ENCODE measurements at regions of chr4 and their contacts with region 1.

Region 1: GRCh38 chr4:76949276-76950051 is at the start of gene SEPTIN11:
- DNase-seq: peak; percentile 97
- H3K4me3 ChIP-seq: peak within 1 kb of the TSS; percentile 70 to 87 (median 78)
- H3K27ac ChIP-seq: peak within 1 kb of the TSS; percentile 87 to 95 (median 92)
- H3K4me1 ChIP-seq: peaks cover 2 to 27% (median 16%) of the 10 kb centered on the region in 4 donors
- H3K27me3 ChIP-seq: no peaks in the 10 kb centered on the region
- CTCF ChIP-seq: no peak
- EP300 ChIP-seq: no peak
- POLR2A ChIP-seq: peak; percentile 52 to 64
- total RNA-seq, gene SEPTIN11: 43.0 to 143 (median 107) TPM

Region 2: DNA sequence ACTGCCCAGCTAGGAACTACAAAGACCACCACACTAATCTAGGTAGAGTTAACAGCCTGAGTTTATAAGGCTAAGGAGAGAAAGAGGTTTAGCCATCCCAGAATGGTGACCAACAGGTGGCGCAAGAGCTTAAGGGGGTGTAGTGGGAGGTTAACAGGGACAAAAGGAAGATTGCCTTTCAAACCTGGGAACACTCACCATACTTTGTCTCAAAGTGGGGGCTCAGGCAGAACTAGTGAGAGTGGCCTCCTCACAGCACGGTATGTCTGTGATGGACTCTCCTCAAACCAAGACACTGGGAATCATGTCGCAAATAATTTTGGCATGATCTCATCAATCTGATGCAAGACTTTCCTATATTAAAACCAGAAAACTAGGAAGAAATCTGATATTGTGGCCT is 102.9 kb after region 1 on chr4:
- intact Hi-C with region 1: loop called (anchors 5 kb)
- DNase-seq: no peak
- H3K4me3 ChIP-seq: no peak overlapping the region
- H3K27ac ChIP-seq: no peak overlapping the region
- H3K4me1 ChIP-seq: peaks cover 0 to 9% (median 4%) of the 10 kb centered on the region in 4 donors
- H3K27me3 ChIP-seq: no peaks in the 10 kb centered on the region
- CTCF ChIP-seq: peak in 1 of 4 experiments; percentile 9
- EP300 ChIP-seq: no peak
- POLR2A ChIP-seq: no peak

Region 3: DNA sequence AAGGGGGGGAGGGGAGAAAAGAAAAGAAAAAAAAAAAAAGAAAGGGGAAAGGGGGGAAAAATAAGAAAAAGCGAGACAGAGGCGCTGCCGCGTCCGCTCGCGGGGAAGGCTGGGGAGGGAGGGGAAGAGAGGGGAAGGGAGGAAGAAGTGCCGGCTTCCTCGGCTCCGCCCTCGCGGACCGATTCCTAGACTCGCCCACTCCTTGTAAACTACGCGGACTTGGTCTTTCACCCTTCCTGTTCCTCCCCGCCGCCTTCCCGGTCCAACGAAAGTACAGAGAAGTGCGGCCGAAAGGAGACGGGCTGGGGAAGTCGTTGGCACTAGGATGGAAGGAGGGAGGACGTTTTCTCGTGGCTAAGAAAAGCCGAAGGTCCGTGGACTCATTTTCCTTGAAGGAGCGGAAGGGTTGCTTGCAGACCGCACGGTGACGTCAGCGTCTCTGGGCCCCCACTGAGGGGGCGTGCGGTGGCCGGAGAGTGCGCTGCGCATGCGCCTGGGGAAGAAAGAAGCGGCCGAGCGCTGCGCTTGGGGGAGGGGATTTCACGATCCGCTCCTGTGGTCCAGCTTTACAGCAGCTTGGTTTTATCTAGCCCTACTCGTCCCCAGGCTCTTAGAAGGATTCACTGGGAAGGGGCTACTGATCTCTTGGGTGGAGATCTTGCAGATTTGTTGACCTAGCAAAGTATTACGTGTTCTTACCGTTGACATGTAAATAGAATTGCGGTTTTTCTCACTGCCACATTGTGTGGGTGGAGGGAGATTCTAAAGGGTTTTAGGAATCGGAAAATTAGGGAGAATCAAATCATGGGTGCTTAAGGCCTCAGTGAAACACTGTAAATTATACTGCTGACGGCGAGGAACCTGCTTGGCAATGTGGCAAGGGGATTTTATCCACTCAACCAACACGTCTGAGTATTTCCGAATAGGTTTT is 126.7 kb after region 1 on chr4 and contains the start of gene CCNI:
- intact Hi-C with region 1: loop called (anchors 5 kb)
- DNase-seq: peak; percentile 99
- H3K4me3 ChIP-seq: peak within 1 kb of the TSS; percentile 89 to 99 (median 94)
- H3K27ac ChIP-seq: peak within 1 kb of the TSS; percentile 98 to 100 (median 100)
- H3K4me1 ChIP-seq: peaks cover 0 to 42% (median 32%) of the 10 kb centered on the region in 4 donors
- H3K27me3 ChIP-seq: no peaks in the 10 kb centered on the region
- CTCF ChIP-seq: no peak
- EP300 ChIP-seq: peak in 3 of 4 donors; percentile 13 to 63 (median 30)
- POLR2A ChIP-seq: peak; percentile 56 to 74
- total RNA-seq, gene CCNI: 248 to 339 (median 288) TPM